CD8-positive, alpha-beta memory T cell (primary cell): ENCODE measurements at regions of chr6 and their contacts with region 1.

Region 1: GRCh38 chr6:119110601-119111548 is 32.4 kb upstream of the FAM184A start:
- DNase-seq: peak in 4 of 5 donors; percentile 21 to 65 (median 54)
- H3K4me3 ChIP-seq: no peak overlapping the region
- H3K4me3 Mint-ChIP-seq: no peak overlapping the region
- H3K27ac ChIP-seq: no peak overlapping the region
- H3K27ac Mint-ChIP-seq: no peak overlapping the region
- H3K4me1 ChIP-seq: peaks cover 9% of the 10 kb centered on the region
- H3K4me1 Mint-ChIP-seq: peaks cover 2 to 11% (median 9%) of the 10 kb centered on the region in 3 donors
- H3K27me3 ChIP-seq: no peaks in the 10 kb centered on the region
- H3K27me3 Mint-ChIP-seq: peaks cover 2 to 5% of the 10 kb centered on the region in 2 donors

Region 2: GRCh38 chr6:118963003-118963402 is 147.9 kb before region 1 on chr6:
- CTCF ChIA-PET with region 1: interaction called, 22 read pairs
- POLR2A ChIA-PET with region 1: interaction called, 7 read pairs
- DNase-seq: peak in 1 of 5 donors; percentile 3
- H3K4me3 ChIP-seq: no peak overlapping the region
- H3K4me3 Mint-ChIP-seq: no peak overlapping the region
- H3K27ac ChIP-seq: no peak overlapping the region
- H3K27ac Mint-ChIP-seq: no peak overlapping the region
- H3K4me1 ChIP-seq: no peaks in the 10 kb centered on the region
- H3K4me1 Mint-ChIP-seq: peaks cover 4 to 7% (median 6%) of the 10 kb centered on the region in 3 donors
- H3K27me3 ChIP-seq: no peaks in the 10 kb centered on the region
- H3K27me3 Mint-ChIP-seq: no peaks in the 10 kb centered on the region

Region 3: DNA sequence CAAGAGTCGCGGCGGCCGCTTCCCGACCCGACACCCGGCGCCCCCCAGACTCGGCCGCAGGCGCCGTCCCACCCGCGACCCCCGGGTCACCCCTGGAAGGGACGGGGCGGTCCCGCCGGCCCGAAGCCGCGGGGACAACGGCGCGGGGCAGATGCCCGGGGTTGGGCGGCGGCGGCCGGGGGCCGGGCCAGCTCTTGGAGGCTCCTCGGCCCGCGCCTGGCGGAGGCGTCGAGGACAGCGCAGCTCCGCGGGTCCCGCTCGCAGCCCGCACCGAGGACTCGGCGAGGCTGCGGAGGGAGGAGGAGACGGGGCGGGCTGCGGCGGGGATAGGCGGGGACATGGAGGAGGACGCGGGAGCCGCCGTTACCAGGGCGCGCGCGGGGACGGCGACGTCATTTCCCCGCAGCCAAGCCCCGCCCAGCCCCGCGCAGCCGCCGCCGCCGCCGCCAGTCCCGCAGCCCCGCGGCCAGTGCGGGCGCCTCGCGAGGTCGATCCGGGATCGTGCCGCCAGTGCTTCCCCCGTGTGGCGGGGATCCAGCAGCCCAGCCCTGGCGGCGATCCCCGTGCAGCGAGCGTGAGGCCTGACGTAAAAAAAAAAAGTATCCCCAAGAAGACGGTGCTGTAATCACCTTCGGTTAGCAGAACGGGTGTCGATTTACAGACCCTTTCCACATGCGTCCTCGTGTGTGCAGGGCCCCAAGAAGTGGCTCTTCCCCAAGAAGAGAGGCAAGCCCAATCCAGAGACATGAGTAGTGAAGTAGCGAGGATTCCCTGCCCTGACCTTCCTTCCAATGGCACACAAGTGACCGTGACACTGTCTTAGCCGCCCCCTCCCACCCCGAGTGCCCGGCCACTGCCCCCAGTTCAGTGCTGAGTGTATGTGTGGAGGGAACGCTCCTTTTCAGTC is 32.2 kb before region 1 on chr6 and contains the start of gene FAM184A:
- CTCF ChIA-PET with region 1: interaction called, 14 read pairs
- POLR2A ChIA-PET with region 1: no interaction called
- DNase-seq: peak; percentile 68 to 82 (median 78)
- H3K4me3 ChIP-seq: peak within 1 kb of the TSS; percentile 63
- H3K4me3 Mint-ChIP-seq: peak within 1 kb of the TSS; percentile 89 to 98 (median 92)
- H3K27ac ChIP-seq: peak within 1 kb of the TSS; percentile 49
- H3K27ac Mint-ChIP-seq: peak within 1 kb of the TSS; percentile 29 to 97 (median 88)
- H3K4me1 ChIP-seq: peaks cover 14% of the 10 kb centered on the region
- H3K4me1 Mint-ChIP-seq: peaks cover 27 to 38% (median 32%) of the 10 kb centered on the region in 3 donors
- H3K27me3 ChIP-seq: no peaks in the 10 kb centered on the region
- H3K27me3 Mint-ChIP-seq: no peaks in the 10 kb centered on the region
- total RNA-seq, gene FAM184A: 2.0 to 2.2 TPM